ENCODE measurements at regions of chr17 and their contacts with region 1.

Region 1: GRCh38 chr17:76523084-76524037 is 14.1 kb downstream of the CYGB start:
- DNase-seq: peak; percentile 84 to 91 (median 89)
- ATAC-seq: peak; percentile 96
- H3K4me3 ChIP-seq: no peak overlapping the region
- H3K27ac ChIP-seq: no peak overlapping the region
- H3K4me1 ChIP-seq: peaks cover 5 to 25% of the 10 kb centered on the region in 2 experiments; a peak in 4 of 5 replicates
- H3K27me3 ChIP-seq: no peaks in the 10 kb centered on the region
- CTCF ChIP-seq: peak; percentile 97 to 99 (median 98)
- EP300 ChIP-seq: no peak
- POLR2A ChIP-seq: no peak
- RAD21 ChIP-seq: peak; percentile 93 to 98

Region 2: GRCh38 chr17:76492989-76493501 is 30.3 kb before region 1 on chr17:
- CTCF ChIA-PET with region 1: no interaction called
- POLR2A ChIA-PET with region 1: no interaction called
- in situ Hi-C with region 1: no loop called
- intact Hi-C with region 1: no loop called
- DNase-seq: no peak
- ATAC-seq: no peak
- H3K4me3 ChIP-seq: no peak overlapping the region
- H3K27ac ChIP-seq: no peak overlapping the region
- H3K4me1 ChIP-seq: peaks cover 5 to 39% of the 10 kb centered on the region in 2 experiments; a peak in 4 of 5 replicates
- H3K27me3 ChIP-seq: peaks cover 0 to 10% of the 10 kb centered on the region in 2 experiments; a peak in 2 of 5 replicates
- CTCF ChIP-seq: no peak
- EP300 ChIP-seq: no peak
- POLR2A ChIP-seq: no peak
- RAD21 ChIP-seq: no peak

Region 3: DNA sequence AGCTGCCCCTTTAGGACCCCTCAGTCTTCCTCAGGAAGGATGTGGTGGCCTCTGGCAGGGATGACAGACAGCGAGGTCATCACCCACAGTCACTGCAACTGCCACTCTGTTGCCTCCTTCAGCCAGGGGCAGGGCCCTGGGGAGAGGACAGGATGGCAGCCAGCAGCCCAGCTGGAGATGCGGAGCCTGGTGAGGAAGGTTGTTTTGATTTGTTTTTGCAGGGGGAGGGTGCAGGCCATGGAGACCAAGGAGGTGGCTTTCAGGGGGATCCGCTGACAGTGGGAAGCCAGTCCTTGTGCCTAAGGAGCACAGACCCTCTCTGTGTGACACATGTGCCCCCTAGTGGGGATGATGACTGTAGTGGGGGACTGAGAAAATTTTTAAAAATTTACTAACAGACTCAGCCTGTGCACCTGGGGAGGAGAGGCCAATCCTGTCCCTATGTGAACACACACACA is 23.9 kb after region 1 on chr17:
- CTCF ChIA-PET with region 1: interaction called, 24 read pairs
- POLR2A ChIA-PET with region 1: interaction called, 3 read pairs
- in situ Hi-C with region 1: no loop called
- intact Hi-C with region 1: loop called (anchors 1 kb)
- DNase-seq: peak; percentile 70 to 82 (median 74)
- ATAC-seq: peak; percentile 94
- H3K4me3 ChIP-seq: no peak overlapping the region
- H3K27ac ChIP-seq: no peak overlapping the region
- H3K4me1 ChIP-seq: peaks cover 0 to 39% of the 10 kb centered on the region in 2 experiments; a peak in 3 of 5 replicates
- H3K27me3 ChIP-seq: no peaks in the 10 kb centered on the region
- CTCF ChIP-seq: peak; percentile 84 to 88 (median 86)
- EP300 ChIP-seq: no peak
- POLR2A ChIP-seq: no peak
- RAD21 ChIP-seq: peak; percentile 72 to 90

Region 4: DNA sequence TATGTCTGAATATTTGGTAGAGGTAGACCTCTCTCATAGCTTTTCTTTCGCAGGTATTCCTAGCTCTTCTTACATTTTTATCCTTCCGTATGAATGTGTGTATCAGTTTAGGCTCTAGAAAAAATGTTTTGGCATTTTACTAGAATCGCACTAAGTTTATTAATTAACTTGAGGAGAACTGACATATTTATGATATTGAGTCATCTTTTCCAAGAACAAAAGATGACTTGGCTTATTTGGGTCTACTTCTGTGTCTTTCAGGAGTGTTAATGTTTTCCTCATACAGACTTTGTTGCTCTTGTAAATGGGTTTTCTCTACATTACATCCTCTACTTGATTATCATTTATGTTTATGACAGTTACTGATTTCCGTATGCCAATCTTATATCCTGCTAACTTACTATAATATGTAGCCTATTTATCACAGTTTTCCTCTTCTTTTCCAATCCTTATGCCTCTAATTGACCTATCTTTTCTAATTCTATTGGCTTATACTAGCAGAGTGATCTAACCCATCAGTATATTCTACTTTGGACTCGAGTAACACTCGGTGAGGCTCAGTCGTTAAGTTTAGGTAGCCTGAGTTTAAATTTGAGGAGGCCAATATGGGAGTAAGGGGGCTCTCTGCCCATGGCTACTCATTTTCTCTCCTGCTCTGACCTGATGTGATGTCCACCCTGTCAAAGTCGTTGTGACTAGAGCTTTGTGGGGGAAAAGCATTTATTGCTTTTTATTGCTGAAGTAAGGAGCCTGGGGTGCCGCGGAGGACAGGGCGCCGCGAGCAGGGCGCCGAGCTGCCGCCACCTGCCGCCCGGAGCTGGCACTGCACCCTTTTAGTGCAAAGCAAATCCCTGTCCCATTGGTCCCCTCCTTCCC is 100.1 kb after region 1 on chr17:
- CTCF ChIA-PET with region 1: interaction called, 19 read pairs
- POLR2A ChIA-PET with region 1: interaction called, 3 read pairs
- in situ Hi-C with region 1: loop called (anchors 5 kb)
- intact Hi-C with region 1: no loop called
- DNase-seq: peak; percentile 74 to 84 (median 78)
- ATAC-seq: peak; percentile 95
- H3K4me3 ChIP-seq: no peak overlapping the region
- H3K27ac ChIP-seq: peak overlapping the region; percentile 54; the same call in 2 of the 3 replicates
- H3K4me1 ChIP-seq: peaks cover 5 to 8% of the 10 kb centered on the region in 2 experiments; a peak in 4 of 5 replicates
- H3K27me3 ChIP-seq: no peaks in the 10 kb centered on the region
- CTCF ChIP-seq: peak; percentile 91 to 94 (median 93)
- EP300 ChIP-seq: peak; percentile 13; the same call in 1 of the 2 replicates
- POLR2A ChIP-seq: no peak; the same call in 1 of the 2 replicates
- RAD21 ChIP-seq: peak; percentile 87 to 92

Region 5: DNA sequence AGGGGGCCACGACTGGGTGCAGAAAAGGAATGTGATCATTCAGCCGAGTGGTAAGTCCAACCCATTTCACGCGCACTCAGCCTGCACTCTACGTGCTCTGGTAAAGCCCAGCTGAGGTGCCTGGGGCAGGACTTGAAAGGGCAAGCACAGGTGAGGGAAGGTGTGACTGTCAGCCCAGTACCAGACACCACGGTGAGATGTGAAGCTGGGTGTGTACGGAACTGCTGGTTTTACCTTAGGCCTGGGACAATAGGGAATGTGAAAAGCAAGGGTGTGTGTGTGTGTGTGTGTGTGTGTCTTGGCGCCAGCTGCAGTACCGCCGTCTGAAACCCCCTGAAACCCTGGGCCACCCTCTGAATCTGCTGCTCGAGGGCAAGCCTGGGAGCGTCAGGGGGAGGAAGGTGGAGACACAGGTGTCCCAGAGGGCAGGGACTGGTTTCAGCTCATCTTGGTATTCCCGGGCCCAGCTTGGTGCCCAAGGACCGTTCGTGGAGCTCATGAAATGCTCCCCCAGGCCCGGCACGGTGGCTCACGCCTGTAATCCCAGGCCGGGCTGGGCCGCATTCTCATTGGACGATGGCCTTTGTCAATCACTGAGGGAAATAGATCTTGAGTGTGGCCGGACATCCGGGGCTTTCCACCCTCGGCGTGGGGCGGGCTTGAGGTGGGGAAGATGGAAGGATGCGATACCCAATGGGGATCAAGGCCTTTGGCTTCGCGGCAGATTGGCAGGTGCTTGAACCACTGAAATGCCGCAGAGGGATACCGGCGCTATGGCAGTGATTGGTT is 148.0 kb after region 1 on chr17:
- CTCF ChIA-PET with region 1: no interaction called
- POLR2A ChIA-PET with region 1: no interaction called
- in situ Hi-C with region 1: no loop called
- intact Hi-C with region 1: no loop called
- DNase-seq: peak; percentile 97 to 99 (median 98)
- ATAC-seq: peak; percentile 97
- H3K4me3 ChIP-seq: peak overlapping the region; percentile 60
- H3K27ac ChIP-seq: peak overlapping the region; percentile 88
- H3K4me1 ChIP-seq: peaks cover 30 to 37% of the 10 kb centered on the region in 2 experiments; a peak in 4 of 5 replicates
- H3K27me3 ChIP-seq: no peaks in the 10 kb centered on the region
- CTCF ChIP-seq: no peak
- EP300 ChIP-seq: no peak
- POLR2A ChIP-seq: peak; percentile 80
- RAD21 ChIP-seq: no peak

Region 6: DNA sequence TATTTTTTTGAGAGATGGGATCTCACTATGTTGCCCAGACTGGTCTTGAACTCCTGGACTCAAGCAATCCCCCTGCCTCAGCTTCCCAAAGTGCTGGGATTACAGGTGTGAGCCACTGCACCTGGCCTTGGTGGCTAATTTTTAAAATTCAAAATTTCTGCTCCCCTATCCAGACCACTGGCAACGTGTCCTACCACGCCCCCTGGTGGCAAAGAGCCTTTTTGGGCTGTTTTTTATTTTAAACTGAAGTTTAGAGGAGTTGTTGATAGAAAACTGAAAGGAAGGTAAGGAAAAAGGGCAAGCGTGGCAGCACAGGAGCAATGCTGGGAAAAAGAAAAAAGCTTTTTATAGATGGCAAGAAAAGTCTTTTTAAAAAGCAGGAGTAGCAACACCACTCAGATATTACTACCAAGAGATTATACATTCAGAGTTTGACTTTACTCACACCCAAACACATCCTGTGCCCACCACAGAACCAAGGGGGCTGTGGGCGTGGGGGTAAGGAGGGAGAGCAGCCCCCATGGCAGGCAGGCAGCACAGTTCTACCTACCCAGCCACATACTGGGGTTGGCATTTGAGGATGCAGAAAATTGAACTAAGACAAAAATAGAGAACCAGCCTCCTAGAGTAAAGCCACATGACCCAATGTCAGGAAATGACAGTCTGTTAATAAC is 191.6 kb after region 1 on chr17:
- CTCF ChIA-PET with region 1: interaction called, 12 read pairs
- POLR2A ChIA-PET with region 1: interaction called, 5 read pairs
- in situ Hi-C with region 1: no loop called
- intact Hi-C with region 1: no loop called
- DNase-seq: peak in 3 of 4 experiments; percentile 47 to 79 (median 56)
- ATAC-seq: peak; percentile 36
- H3K4me3 ChIP-seq: no peak overlapping the region
- H3K27ac ChIP-seq: no peak overlapping the region; the same call in 2 of the 3 replicates
- H3K4me1 ChIP-seq: peaks cover 26 to 35% of the 10 kb centered on the region in 2 experiments
- H3K27me3 ChIP-seq: no peaks in the 10 kb centered on the region
- CTCF ChIP-seq: peak; percentile 79 to 84 (median 82)
- EP300 ChIP-seq: no peak
- POLR2A ChIP-seq: no peak
- RAD21 ChIP-seq: peak; percentile 59 to 70

Measured in K562 (cell line).